Mammary epithelial cell (primary cell): ENCODE measurements at regions of chr17 and their contacts with region 1.

Region 1: DNA sequence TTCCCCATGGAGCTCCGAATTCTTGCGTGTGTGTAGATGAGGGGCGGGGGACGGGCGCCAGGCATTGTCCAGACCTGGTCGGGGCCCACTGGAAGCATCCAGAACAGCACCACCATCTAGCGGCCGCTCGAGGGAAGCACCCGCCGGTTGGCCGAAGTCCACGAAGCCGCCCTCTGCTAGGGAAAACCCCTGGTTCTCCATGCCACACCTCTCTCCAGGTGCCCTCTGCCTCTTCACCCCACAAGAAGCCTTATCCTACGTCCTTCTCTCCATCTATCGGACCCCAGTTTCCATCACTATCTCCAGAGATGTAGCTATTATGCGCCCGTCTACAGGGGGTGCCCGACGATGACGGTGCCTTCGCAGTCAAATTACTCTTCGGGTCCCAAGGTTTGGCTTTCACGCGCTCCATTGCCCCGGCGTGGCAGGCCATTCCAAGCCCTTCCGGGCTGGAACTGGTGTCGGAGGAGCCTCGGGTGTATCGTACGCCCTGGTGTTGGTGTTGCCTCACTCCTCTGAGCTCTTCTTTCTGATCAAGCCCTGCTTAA is 617 bp upstream of the SENP3 start:
- DNase-seq: peak; percentile 87
- H3K4me3 ChIP-seq: peak overlapping the region; percentile 60 to 82 (median 73)
- H3K27ac ChIP-seq: peak overlapping the region; percentile 76
- H3K4me1 ChIP-seq: peaks cover 40% of the 10 kb centered on the region
- H3K27me3 ChIP-seq: no peaks in the 10 kb centered on the region
- CTCF ChIP-seq: peak; percentile 64 to 82

Region 2: DNA sequence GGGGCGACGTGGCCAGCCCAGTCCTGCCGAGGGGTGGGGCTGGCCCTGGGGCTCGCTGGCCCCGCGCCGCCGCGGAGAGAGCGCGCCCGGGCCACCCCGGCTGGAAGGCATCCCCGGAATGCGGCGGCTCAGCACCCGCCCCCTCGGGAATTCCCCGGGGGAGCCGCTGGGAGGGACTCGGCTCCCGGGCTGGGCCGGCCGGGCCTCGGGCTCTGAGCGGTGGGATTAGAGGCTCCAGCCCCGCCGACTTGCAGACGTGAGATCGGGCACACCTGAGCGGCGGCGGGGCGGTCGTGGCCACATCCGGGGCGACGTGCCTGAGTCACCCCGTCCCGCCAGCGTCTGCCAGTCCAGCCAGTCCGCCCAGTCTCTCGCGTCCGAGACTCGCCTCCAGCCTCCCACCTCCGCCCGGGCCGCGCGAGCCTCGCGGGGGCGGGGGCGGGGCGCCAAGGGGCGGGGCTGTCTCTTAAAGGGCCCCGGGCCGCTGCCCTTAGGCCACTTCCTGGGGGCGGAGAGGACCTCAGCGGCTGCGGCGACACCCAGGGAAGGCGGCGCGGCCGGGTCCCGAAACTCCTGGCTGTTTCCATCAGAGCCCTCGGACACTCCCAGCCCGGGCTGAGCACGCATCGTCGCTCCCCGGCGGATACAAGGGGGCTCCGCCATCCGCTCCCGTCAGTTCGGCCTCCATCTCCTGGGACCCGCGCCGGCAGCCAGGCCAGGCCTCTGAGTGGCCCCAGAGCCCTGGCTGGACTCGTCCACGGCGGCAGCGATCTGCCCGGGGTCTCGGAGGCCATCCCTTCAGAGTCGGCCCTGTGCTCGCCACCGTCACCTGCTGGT is 209.2 kb before region 1 on chr17 and contains the start of gene KCTD11:
- CTCF ChIA-PET with region 1: no interaction called
- dilution Hi-C with region 1: no loop called
- in situ Hi-C with region 1: no loop called
- intact Hi-C with region 1: loop called (anchors 1 kb)
- DNase-seq: peak; percentile 99
- H3K4me3 ChIP-seq: peak within 1 kb of the TSS; percentile 60 to 88 (median 77)
- H3K27ac ChIP-seq: peak within 1 kb of the TSS; percentile 99
- H3K4me1 ChIP-seq: peaks cover 46% of the 10 kb centered on the region
- H3K27me3 ChIP-seq: no peaks in the 10 kb centered on the region
- CTCF ChIP-seq: peak in 1 of 2 donors; percentile 30
- total RNA-seq, gene KCTD11: 13.2 to 43.9 TPM

Region 3: GRCh38 chr17:7403977-7404736 is 156.9 kb before region 1 on chr17 and contains the start of gene TMEM256:
- CTCF ChIA-PET with region 1: no interaction called
- dilution Hi-C with region 1: no loop called
- in situ Hi-C with region 1: no loop called
- intact Hi-C with region 1: loop called (anchors 2 kb)
- DNase-seq: peak; percentile 99
- H3K4me3 ChIP-seq: peak within 1 kb of the TSS; percentile 66 to 86 (median 70)
- H3K27ac ChIP-seq: peak within 1 kb of the TSS; percentile 42
- H3K4me1 ChIP-seq: peaks cover 7% of the 10 kb centered on the region
- H3K27me3 ChIP-seq: no peaks in the 10 kb centered on the region
- CTCF ChIP-seq: no peak
- total RNA-seq, gene TMEM256: 43.8 to 70.8 TPM

Region 4: GRCh38 chr17:7496470-7497183 is 64.5 kb before region 1 on chr17:
- CTCF ChIA-PET with region 1: no interaction called
- dilution Hi-C with region 1: no loop called
- in situ Hi-C with region 1: no loop called
- intact Hi-C with region 1: no loop called
- DNase-seq: no peak
- H3K4me3 ChIP-seq: no peak overlapping the region
- H3K27ac ChIP-seq: no peak overlapping the region
- H3K4me1 ChIP-seq: no peaks in the 10 kb centered on the region
- H3K27me3 ChIP-seq: no peaks in the 10 kb centered on the region
- CTCF ChIP-seq: no peak

Region 5: GRCh38 chr17:7572588-7573323 is 11.7 kb after region 1 on chr17:
- CTCF ChIA-PET with region 1: no interaction called
- dilution Hi-C with region 1: no loop called
- in situ Hi-C with region 1: no loop called
- intact Hi-C with region 1: loop called (anchors 1 kb)
- DNase-seq: peak; percentile 99
- H3K4me3 ChIP-seq: peak overlapping the region; percentile 95 to 98 (median 98)
- H3K27ac ChIP-seq: peak overlapping the region; percentile 95
- H3K4me1 ChIP-seq: peaks cover 38% of the 10 kb centered on the region
- H3K27me3 ChIP-seq: no peaks in the 10 kb centered on the region
- CTCF ChIP-seq: no peak